ENCODE measurements at regions of chr4 and their contacts with region 1.

Region 1: DNA sequence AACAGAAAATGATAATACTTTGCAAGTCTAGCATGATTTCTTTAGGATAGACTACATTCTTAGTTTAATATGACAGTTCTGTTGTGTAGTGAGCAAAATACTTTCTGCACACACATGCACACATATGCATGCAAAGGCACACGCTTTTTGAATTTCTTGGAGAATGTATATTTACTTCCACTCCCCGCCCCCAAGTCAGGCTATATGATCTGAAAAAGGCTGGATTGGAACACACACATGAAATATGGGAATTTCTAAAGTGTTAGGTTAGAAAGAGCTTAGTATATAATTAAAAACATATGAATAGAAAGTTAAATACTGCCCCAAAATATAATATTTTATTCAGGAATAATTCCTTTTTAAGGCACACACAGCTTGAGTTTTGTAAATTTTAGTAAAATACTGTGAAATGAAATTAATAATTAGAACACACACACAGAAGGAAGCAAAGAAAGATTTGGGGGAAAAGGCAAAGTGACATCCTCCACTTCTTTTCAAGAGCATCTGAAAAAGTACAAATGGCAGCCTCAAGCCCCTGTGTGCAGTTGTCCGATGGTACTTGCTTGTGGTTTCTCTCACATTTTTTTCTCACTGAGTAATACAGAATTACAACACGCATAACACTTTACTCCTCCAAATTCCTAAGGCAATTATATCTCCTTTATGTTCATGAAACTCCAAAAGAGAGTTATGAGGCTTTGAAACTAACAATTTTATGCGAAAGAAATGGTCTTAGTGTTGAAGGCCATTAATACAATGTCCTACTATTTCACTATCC is 228.9 kb upstream of the ETNPPL start:
- DNase-seq: peak; percentile 51
- H3K4me3 Mint-ChIP-seq: no peak overlapping the region
- H3K27ac Mint-ChIP-seq: no peak overlapping the region
- H3K4me1 Mint-ChIP-seq: no peaks in the 10 kb centered on the region
- H3K27me3 Mint-ChIP-seq: no peaks in the 10 kb centered on the region
- CTCF ChIP-seq: no peak

Region 2: GRCh38 chr4:108965016-108965415 is 26.7 kb before region 1 on chr4:
- CTCF ChIA-PET with region 1: no interaction called
- POLR2A ChIA-PET with region 1: no interaction called
- intact Hi-C with region 1: no loop called
- DNase-seq: no peak
- H3K4me3 Mint-ChIP-seq: no peak overlapping the region
- H3K27ac Mint-ChIP-seq: no peak overlapping the region
- H3K4me1 Mint-ChIP-seq: no peaks in the 10 kb centered on the region
- H3K27me3 Mint-ChIP-seq: no peaks in the 10 kb centered on the region
- CTCF ChIP-seq: no peak

Region 3: DNA sequence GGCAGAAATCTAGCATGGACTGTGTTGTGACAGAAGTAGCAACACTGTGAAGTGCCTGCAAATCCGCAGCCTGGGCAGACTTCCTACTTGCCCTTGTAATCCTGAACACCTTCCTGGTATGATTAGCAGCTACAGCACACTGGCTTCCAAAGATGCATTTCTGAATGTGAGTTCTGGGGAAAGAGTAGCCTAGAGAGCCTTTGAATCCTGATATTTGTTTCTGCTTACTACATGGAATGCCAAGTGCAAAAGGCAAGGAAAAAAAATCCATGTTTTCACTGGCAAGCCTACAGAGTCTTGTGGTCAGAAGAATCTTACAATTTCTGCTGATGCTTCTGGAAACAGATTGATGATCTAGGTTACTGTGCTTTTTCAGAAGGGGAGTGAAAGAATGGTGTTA is 87.0 kb after region 1 on chr4:
- CTCF ChIA-PET with region 1: no interaction called
- POLR2A ChIA-PET with region 1: no interaction called
- intact Hi-C with region 1: loop called (anchors 10 kb)
- DNase-seq: peak; percentile 66
- H3K4me3 Mint-ChIP-seq: peak overlapping the region; percentile 19
- H3K27ac Mint-ChIP-seq: peak overlapping the region; percentile 58
- H3K4me1 Mint-ChIP-seq: peaks cover 15% of the 10 kb centered on the region
- H3K27me3 Mint-ChIP-seq: no peaks in the 10 kb centered on the region
- CTCF ChIP-seq: no peak